Activated CD8-positive, alpha-beta memory T cell treated with anti-CD3 and anti-CD28 coated beads, Interleukin-2, amount 10 ng/mL, durations not matched to agents 7 days and 5 days (primary cell): ENCODE measurements at regions of chr10 and their contacts with region 1.

Region 1: DNA sequence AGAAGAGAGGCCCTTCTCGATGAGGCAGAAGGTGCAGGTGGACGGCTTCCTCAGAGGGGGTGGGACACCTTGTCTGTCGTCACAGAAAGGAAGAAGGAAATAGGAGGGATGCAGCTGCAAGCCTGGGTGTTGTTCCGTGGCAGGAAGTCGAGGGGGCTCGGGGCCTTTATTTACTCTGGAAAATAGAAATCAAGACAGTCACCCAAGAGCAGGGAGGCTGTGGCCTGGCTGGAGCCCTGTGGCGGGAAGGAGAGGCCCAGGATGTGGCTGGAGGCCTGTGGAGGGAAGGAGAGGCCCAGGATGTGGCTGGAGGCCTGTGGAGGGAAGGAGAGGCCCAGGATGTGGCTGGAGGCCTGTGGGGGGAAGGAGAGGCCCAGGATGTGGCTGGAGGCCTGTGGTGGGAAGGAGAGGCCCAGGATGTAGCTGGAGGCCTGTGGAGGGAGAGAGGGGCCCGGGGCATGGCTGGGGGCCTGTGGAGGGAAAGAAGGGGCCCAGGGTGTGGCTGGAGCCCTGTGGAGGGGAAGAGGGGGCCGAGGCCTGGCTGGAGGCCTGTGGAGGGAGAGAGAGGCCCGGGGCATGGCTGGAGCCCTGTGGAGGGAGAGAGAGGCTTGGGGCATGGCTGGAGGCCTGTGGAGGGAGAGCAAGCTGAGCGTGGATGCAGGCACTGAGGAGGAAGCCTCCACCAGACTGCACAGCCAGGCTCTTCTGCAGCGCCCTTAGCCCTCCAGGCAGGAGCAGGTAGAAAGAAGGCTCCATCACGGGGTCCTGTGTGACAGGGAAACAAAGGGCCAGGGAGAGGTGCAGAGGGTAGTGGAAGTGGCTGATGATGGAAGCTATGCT is 97.3 kb upstream of the SFMBT2 start:
- DNase-seq: peak; percentile 89
- ATAC-seq: peak; percentile 79
- H3K4me3 Mint-ChIP-seq: peak overlapping the region; percentile 41
- H3K27ac Mint-ChIP-seq: peak overlapping the region; percentile 96
- H3K4me1 Mint-ChIP-seq: peaks cover 71% of the 10 kb centered on the region
- H3K27me3 Mint-ChIP-seq: peaks cover 4% of the 10 kb centered on the region

Region 2: GRCh38 chr10:7484456-7485243 is 23.5 kb before region 1 on chr10:
- CTCF ChIA-PET with region 1: interaction called, 10 read pairs
- DNase-seq: peak; percentile 93
- ATAC-seq: peak; percentile 92
- H3K4me3 Mint-ChIP-seq: peak overlapping the region; percentile 72
- H3K27ac Mint-ChIP-seq: peak overlapping the region; percentile 99
- H3K4me1 Mint-ChIP-seq: peaks cover 86% of the 10 kb centered on the region
- H3K27me3 Mint-ChIP-seq: no peaks in the 10 kb centered on the region

Region 3: DNA sequence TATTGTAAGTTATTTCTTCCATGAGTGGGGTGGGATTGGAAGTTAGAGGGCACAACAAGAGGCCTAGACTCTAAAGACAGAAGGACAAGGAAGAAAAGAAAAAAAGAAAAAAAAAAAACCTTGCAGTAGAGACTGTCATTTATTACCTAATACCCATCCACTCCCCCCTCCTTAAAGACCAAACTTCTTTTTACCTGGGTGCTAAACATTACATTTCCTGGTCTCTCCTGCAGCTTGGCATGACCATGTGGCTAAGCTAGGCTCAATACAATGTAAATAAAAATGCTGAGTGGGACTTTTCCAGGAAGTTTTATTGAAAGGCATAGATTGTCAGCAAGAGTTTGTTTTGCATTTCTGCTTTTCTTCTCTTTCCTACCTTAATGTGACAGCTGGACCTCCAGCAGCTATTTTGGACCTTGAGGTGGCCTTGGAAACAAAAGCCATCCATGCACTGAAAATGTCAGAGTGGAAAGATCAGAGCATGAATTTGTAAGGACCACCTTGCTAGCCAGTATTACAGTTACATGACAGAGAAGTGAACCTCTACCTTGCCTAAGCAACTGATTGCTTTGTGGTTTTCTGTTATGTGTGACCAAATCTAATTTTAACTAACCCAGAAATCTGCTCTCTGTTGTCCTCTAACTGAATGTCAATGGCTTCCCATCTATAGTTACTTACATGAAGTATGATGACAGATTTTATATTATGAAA is 16.0 kb before region 1 on chr10:
- CTCF ChIA-PET with region 1: interaction called, 15 read pairs
- DNase-seq: no peak
- ATAC-seq: peak; percentile 84
- H3K4me3 Mint-ChIP-seq: peak overlapping the region; percentile 28
- H3K27ac Mint-ChIP-seq: peak overlapping the region; percentile 93
- H3K4me1 Mint-ChIP-seq: peaks cover 80% of the 10 kb centered on the region
- H3K27me3 Mint-ChIP-seq: no peaks in the 10 kb centered on the region

Region 4: DNA sequence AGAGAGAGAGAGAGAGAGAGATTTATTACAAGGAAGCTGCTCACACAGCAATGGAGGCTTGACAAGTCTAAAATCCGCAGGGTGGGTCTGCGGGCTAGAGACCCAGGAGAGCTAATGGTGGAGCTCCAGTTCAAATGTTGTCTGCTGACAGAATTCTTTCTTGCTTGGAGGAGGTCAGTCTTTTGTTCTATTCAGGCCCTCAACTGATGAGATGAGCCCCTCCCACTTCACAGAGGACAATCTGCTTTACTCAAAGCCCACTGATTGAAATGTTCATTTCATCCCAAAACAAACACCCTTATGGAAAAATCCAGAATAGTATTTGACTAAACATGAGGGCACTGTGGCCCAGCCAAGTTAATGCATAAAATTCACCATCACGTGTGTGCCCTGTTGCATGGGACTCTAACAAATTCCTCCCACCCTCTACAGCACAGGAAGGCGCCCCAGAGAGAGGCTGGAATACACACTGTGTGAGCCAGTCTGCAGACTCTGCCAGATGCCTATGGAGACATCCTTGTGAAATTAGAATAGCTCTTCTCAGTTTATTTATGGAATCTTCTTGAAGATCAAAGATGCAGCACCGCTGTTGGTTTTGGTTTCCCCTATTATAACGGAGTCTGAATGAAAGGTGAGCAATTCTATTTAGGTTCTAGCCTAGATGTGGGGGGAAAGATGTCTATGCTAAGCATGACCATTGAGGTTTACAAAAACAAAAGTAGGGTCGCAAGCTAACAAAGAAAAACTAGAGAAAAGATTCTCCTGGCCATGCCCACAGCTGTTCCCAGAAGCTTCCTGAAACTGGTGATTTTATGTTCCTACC is 25.8 kb after region 1 on chr10:
- CTCF ChIA-PET with region 1: no interaction called
- DNase-seq: no peak
- ATAC-seq: no peak
- H3K4me3 Mint-ChIP-seq: no peak overlapping the region
- H3K27ac Mint-ChIP-seq: no peak overlapping the region
- H3K4me1 Mint-ChIP-seq: peaks cover 4% of the 10 kb centered on the region
- H3K27me3 Mint-ChIP-seq: peaks cover 21% of the 10 kb centered on the region